K562 (cell line): ENCODE measurements at regions of chr6 and their contacts with region 1.

Region 1: DNA sequence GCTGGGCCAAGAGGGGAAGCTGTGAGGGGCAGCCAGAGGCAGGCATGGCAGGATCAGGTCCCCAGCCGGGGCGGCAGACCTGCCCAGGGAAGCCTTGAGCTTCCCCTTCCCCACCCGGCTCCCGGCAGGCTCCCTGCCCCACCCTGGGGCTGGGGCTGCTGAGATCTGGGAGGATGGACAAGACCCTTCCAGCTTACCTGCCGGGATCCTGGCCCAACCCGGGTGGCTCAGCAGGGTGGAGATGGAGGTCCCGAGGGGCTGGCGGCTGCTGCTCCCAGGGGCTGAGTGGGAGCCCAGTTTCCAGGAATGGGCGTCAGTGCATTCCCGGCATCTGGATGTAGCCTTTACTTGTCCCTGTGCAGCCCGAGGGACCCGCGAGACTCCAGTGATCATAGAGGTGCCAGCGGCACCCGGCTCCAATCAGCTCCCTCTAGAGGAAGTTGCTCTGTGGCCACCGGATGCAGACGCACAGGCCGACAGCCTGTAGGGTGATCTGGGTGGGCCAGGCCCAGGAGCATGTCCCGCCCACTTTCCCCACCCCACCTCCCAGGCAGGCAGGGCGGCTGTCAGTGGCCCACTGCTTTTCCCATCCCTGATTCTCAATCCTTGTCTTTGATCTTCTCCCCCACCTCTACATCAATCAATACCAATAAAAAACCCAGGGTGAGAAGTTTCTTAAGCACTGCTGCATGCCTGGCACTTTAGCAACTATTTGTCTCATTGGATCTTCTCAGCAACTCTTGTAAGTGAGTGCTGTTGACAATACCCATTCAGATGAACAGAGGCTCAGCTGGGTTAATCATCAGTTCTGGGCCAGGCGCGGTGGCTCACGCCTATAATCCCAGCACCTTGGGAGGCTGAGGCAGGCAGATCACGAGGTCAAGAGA is at the start of gene BAK1:
- DNase-seq: peak; percentile 96 to 98 (median 97)
- ATAC-seq: peak; percentile 98
- H3K4me3 ChIP-seq: peak within 1 kb of the TSS; percentile 97
- H3K27ac ChIP-seq: peak within 1 kb of the TSS; percentile 72
- H3K4me1 ChIP-seq: peaks cover 10 to 40% of the 10 kb centered on the region in 2 experiments; a peak in 4 of 5 replicates
- H3K27me3 ChIP-seq: no peaks in the 10 kb centered on the region
- CTCF ChIP-seq: peak; percentile 76 to 88 (median 81)
- EP300 ChIP-seq: no peak
- POLR2A ChIP-seq: peak; percentile 84
- RAD21 ChIP-seq: peak in 1 of 2 experiments; percentile 51; a peak in 2 of 4 replicates
- polyA plus RNA-seq, gene BAK1: 5.4 to 9.7 TPM

Region 2: DNA sequence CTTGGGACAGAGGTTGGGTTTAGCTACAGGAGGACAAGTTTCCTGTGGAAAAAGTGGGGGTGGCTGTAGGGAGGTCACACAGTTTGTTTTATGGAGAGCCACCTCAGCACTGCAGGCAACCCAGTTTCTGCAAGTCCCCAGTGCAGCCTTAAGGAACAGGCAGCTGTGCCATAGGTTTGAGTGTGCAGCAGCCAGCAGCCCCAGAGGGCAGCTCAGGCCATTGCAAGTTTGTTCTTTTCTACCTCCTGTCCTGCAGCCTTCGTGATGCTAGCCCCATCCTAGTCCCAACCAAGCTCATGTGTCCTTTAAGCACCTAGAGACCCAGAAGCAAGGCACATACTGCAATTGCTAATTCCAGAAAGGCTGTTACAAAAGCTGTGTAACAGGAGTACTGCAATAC is 66.9 kb before region 1 on chr6:
- CTCF ChIA-PET with region 1: interaction called, 3 read pairs
- POLR2A ChIA-PET with region 1: no interaction called
- in situ Hi-C with region 1: no loop called
- intact Hi-C with region 1: loop called (anchors 5 kb)
- DNase-seq: no peak
- ATAC-seq: peak; percentile 18; the same call in 2 of the 3 replicates
- H3K4me3 ChIP-seq: no peak overlapping the region
- H3K27ac ChIP-seq: no peak overlapping the region
- H3K4me1 ChIP-seq: peaks cover 7 to 18% of the 10 kb centered on the region in 2 experiments; a peak in 4 of 5 replicates
- H3K27me3 ChIP-seq: peaks cover 30 to 44% of the 10 kb centered on the region in 2 experiments; a peak in 4 of 5 replicates
- CTCF ChIP-seq: 0 out of 6 replicates have a peak, but pooled peaks of 1 of the 3 experiments have one; percentile 11
- EP300 ChIP-seq: no peak
- POLR2A ChIP-seq: no peak
- RAD21 ChIP-seq: no peak

Region 3: DNA sequence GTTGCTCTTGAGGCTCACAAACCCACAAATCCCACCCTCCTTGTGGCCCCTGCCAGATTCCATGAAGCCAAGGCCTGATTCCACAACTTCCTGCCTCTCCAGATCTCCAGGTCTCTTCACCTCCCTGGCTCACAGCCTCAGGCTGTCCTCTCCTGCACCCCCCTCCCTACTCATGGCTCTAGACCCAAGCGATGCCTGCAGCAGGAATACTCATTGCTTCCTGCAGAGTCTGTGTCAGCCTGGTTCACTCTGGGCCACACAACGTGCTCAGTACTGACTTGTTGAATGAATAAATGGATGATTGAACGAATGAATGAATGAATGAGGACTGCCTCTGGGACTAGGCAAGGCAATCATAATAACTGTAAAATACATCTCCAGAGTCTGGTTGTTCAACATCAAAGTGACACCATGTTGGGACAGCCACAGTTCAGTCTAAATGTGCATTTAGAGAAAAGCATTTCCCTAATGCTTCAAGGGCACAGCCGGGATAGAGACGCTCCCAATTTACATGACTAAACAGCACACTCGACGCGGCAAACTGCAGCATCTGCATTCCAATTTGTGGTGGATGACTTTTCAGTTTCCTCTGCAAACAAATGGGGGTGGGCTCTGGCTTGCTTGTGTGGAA is 425.9 kb after region 1 on chr6:
- CTCF ChIA-PET with region 1: no interaction called
- POLR2A ChIA-PET with region 1: no interaction called
- in situ Hi-C with region 1: loop called (anchors 10 kb)
- intact Hi-C with region 1: no loop called
- DNase-seq: no peak
- ATAC-seq: no peak
- H3K4me3 ChIP-seq: no peak overlapping the region
- H3K27ac ChIP-seq: no peak overlapping the region
- H3K4me1 ChIP-seq: 0 out of 5 replicates have a peak, but pooled peaks cover 0 to 3% of the 10 kb centered on the region in 2 experiments
- H3K27me3 ChIP-seq: peaks cover 16 to 60% of the 10 kb centered on the region in 2 experiments
- CTCF ChIP-seq: no peak
- EP300 ChIP-seq: no peak
- POLR2A ChIP-seq: no peak
- RAD21 ChIP-seq: no peak

Region 4: DNA sequence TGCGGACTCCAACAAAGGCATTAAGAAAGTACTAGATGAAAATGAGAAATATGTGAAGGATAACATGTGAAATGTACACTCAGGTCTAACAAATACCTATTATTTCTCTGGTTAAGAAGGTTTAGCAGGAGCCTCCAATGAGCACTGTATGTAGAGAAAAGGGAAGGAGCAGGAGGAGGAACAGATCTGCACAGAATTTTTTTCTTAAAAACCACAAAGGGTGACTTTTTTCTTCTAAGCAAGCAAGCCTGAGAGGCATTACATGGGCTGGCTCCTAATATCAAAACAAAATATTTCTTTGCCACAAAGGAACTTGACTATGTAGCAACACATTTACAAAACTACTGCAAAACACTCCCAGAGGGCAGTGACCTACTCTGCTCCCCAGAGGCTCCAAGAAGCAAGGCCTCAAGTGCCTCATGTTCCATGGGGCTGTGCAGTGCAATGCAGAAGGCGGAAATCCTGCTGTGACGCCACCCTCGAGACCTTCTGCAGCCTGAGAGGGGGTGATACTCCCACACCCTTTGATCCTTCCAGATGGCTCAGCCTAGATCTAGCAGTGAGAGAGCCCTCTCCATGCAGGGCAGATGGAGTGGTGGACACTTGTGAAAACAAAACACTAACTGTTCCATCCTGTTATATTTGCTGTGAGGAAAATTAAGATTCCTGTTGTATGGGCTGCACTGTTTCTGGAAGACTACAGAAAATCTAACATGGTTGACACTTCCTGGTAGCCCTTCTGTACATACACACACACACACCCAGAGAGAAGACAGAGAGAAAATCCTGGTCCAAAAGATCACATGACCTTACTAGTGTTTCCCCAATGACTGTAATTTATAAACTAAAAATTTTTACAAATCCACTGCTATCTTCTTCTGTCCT is 704.7 kb after region 1 on chr6:
- CTCF ChIA-PET with region 1: no interaction called
- POLR2A ChIA-PET with region 1: no interaction called
- in situ Hi-C with region 1: no loop called
- intact Hi-C with region 1: no loop called
- DNase-seq: peak; percentile 69 to 93 (median 82)
- ATAC-seq: peak; percentile 84
- H3K4me3 ChIP-seq: no peak overlapping the region
- H3K27ac ChIP-seq: peak overlapping the region; percentile 7
- H3K4me1 ChIP-seq: peaks cover 8 to 52% of the 10 kb centered on the region in 2 experiments; a peak in 4 of 5 replicates
- H3K27me3 ChIP-seq: no peaks in the 10 kb centered on the region
- CTCF ChIP-seq: peak in 2 of 3 experiments; percentile 13 to 18; a peak in 2 of 6 replicates
- EP300 ChIP-seq: peak; percentile 73; the same call in 1 of the 2 replicates
- POLR2A ChIP-seq: peak; percentile 27; the same call in 1 of the 2 replicates
- RAD21 ChIP-seq: peak in 1 of 2 experiments; percentile 37; a peak in 2 of 4 replicates